PC-3 (cell line): ENCODE measurements at regions of chr4 and their contacts with region 1.

Region 1: GRCh38 chr4:154314248-154314647 is 177.4 kb downstream of the DCHS2 start:
- DNase-seq: peak; percentile 53
- ATAC-seq: no peak
- H3K4me3 ChIP-seq: no peak overlapping the region
- H3K27ac ChIP-seq: no peak overlapping the region
- H3K4me1 ChIP-seq: no peaks in the 10 kb centered on the region
- H3K27me3 ChIP-seq: no peaks in the 10 kb centered on the region
- CTCF ChIP-seq: peak; percentile 48

Region 2: DNA sequence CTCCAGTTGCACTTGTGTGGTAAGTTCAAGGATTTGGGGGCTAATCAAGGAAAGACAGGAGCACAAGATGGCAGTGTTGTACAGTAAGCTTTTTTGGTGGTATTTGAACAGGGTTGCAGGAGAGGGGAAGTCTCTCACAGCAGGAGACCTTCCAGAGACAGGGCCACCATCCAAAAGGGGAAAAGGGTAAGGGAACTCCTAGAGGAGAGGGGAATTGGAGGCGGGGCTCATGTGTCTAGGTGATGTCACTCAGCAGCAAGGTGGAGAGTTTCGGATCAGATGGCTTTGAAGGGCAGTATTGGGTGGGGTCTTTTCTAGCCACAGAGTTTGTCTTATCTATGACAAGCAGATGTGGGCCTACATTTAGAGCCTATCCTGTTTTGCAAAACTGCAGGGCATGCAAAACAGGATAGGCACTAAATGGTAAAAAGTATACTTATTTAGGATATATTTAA is 541.0 kb before region 1 on chr4:
- CTCF ChIA-PET with region 1: no interaction called
- POLR2A ChIA-PET with region 1: no interaction called
- intact Hi-C with region 1: loop called (anchors 5 kb)
- DNase-seq: peak; percentile 30
- ATAC-seq: no peak
- H3K4me3 ChIP-seq: no peak overlapping the region
- H3K27ac ChIP-seq: no peak overlapping the region
- H3K4me1 ChIP-seq: no peaks in the 10 kb centered on the region
- H3K27me3 ChIP-seq: no peaks in the 10 kb centered on the region; the same call in 1 of the 2 replicates
- CTCF ChIP-seq: peak; percentile 38

Region 3: GRCh38 chr4:153785910-153786721 is 528.1 kb before region 1 on chr4:
- CTCF ChIA-PET with region 1: no interaction called
- POLR2A ChIA-PET with region 1: no interaction called
- intact Hi-C with region 1: loop called (anchors 1 kb)
- DNase-seq: peak; percentile 53
- ATAC-seq: peak; percentile 74
- H3K4me3 ChIP-seq: no peak overlapping the region
- H3K27ac ChIP-seq: no peak overlapping the region
- H3K4me1 ChIP-seq: peaks cover 17% of the 10 kb centered on the region
- H3K27me3 ChIP-seq: peaks cover 26% of the 10 kb centered on the region
- CTCF ChIP-seq: peak; percentile 64